ENCODE measurements at regions of chr19 and their contacts with region 1.

Region 1: GRCh38 chr19:45439569-45440254 is 16.0 kb upstream of the ERCC1 start:
- DNase-seq: no peak
- H3K4me3 ChIP-seq: peak overlapping the region; percentile 53
- H3K27me3 ChIP-seq: no peaks in the 10 kb centered on the region
- CTCF ChIP-seq: peak; percentile 90

Region 2: GRCh38 chr19:45423589-45424190 is 16.0 kb before region 1 on chr19 and contains the start of gene ERCC1:
- CTCF ChIA-PET with region 1: interaction called, 20 read pairs
- POLR2A ChIA-PET with region 1: no interaction called
- DNase-seq: no peak
- H3K4me3 ChIP-seq: peak within 1 kb of the TSS; percentile 63
- H3K27me3 ChIP-seq: no peaks in the 10 kb centered on the region
- CTCF ChIP-seq: no peak
- polyA plus RNA-seq, gene ERCC1: 84.3 and 121 TPM in 2 replicates

Region 3: DNA sequence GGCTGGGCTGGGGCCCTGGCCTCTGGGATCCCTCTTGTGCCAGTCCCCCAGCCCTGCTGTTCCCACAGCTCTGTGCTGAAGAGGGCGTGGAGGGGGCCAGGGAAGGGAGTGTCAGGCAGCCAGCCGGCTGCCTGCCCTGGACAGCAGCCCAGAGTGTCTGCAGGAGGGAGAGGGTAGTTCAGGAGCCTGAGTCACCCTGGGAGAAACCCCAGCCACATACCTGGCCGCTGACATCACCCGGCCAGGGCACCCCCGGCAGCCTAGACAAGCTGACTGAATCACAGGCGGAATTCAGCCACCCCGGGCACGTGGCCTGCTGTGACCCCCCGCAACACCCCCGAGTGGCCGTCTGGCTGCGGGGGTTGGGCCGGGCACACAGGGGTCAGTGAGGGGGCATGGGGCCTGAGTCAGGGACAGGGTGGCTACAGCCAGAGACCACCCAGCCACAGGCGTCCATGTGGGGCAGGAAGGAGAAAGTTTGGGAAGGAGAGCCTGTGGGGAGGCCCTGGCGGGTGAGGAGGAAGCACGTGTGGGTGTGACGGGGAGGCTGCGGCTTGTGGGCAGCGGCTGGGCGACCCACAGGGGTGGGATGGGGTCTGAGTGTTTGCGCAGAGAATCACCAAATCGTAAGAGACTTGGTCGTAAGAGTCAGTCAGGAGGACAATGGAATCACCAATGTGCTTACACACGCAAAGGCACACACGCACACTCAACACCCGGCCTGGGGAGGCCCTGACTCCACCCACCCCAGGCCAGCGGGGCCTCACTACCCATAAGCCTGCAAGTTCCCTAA is 16.2 kb after region 1 on chr19:
- CTCF ChIA-PET with region 1: interaction called, 34 read pairs
- POLR2A ChIA-PET with region 1: no interaction called
- DNase-seq: peak; percentile 99
- H3K4me3 ChIP-seq: 0 out of 2 replicates have a peak overlapping the region, but pooled peaks have one; percentile 2
- H3K27me3 ChIP-seq: no peaks in the 10 kb centered on the region
- CTCF ChIP-seq: no peak

Region 4: GRCh38 chr19:45462174-45462573 is 22.5 kb after region 1 on chr19:
- CTCF ChIA-PET with region 1: interaction called, 64 read pairs
- POLR2A ChIA-PET with region 1: no interaction called
- DNase-seq: no peak
- H3K4me3 ChIP-seq: no peak overlapping the region
- H3K27me3 ChIP-seq: no peaks in the 10 kb centered on the region
- CTCF ChIP-seq: no peak

Region 5: GRCh38 chr19:45469132-45469944 is 29.6 kb after region 1 on chr19:
- CTCF ChIA-PET with region 1: interaction called, 764 read pairs
- POLR2A ChIA-PET with region 1: no interaction called
- DNase-seq: no peak
- H3K4me3 ChIP-seq: peak overlapping the region; percentile 77
- H3K27me3 ChIP-seq: no peaks in the 10 kb centered on the region
- CTCF ChIP-seq: 0 out of 2 replicates have a peak, but pooled peaks have one; percentile 8

Region 6: GRCh38 chr19:45478454-45479238 is 38.9 kb after region 1 on chr19:
- CTCF ChIA-PET with region 1: interaction called, 764 read pairs
- POLR2A ChIA-PET with region 1: no interaction called
- DNase-seq: no peak
- H3K4me3 ChIP-seq: peak overlapping the region; percentile 53
- H3K27me3 ChIP-seq: no peaks in the 10 kb centered on the region
- CTCF ChIP-seq: peak; percentile 93

Region 7: DNA sequence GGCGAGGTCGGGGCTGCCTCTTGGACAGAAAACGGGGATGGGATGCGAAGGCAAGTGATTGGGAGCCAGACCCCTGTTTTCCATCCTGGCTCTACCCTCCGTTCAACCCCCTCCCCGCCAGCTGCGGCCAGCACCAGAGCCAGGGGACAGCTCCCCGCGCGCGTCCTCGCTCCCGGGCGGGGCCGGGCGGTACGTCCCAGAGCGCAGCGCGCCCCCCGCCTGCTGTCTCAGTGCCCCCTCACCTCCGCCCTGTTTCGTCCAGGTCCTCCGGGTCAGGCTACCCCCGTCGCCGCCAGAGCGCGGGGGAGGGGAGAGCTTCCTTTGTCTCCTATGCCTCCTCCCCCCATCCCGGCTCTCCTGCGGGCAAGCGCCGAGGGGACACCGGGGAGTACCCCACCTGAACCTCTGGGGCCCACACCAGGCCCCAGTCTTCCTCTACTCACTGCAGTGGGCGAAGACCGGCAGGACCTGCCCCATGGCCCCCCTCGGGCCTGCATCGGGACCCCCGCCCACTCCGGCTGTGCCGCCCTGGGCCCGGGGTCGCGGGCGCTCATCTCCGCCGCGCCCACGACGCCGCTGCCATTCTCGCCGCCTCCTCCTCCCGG is 56.7 kb after region 1 on chr19:
- CTCF ChIA-PET with region 1: interaction called, 764 read pairs
- POLR2A ChIA-PET with region 1: no interaction called
- DNase-seq: no peak
- H3K4me3 ChIP-seq: peak overlapping the region; percentile 70
- H3K27me3 ChIP-seq: no peaks in the 10 kb centered on the region
- CTCF ChIP-seq: no peak